ENCODE measurements at regions of chr17 and their contacts with region 1.

Region 1: DNA sequence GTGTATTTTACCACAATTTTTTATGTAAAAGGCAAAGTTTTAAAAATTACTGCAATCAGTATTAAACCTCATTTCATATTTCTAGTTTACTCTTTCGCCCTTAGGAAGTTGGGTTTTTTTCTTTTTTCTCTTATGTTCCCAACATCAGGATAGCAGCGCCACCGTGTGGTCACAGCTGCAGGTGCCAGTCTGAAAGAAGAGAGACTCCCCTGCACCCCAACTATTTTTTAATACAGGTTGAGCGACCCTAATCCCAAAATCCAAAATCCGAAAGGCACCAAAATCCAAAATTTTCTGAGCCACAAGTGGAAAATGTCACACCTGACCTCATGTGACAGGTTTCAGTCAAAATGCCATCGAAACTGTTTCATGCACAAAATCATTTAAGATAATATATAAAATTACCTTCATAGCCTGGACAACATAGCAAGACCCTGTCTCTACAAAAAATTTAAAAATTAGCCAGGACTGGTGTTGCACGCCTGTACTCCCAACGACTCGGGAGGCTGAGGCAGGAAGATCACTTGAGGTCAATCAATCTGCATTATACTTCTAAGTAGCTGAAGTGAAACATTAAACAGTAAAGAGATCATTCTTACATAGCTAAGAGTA is 21.8 kb upstream of the ASGR2 start:
- DNase-seq: peak; percentile 80
- ATAC-seq: no peak
- H3K4me3 Mint-ChIP-seq: peak overlapping the region; percentile 50
- H3K27ac Mint-ChIP-seq: no peak overlapping the region
- H3K4me1 Mint-ChIP-seq: peaks cover 62% of the 10 kb centered on the region
- H3K27me3 Mint-ChIP-seq: peaks cover 48% of the 10 kb centered on the region
- CTCF ChIP-seq: peak; percentile 83

Region 2: GRCh38 chr17:7021993-7022778 is 114.2 kb before region 1 on chr17:
- CTCF ChIA-PET with region 1: interaction called, 10 read pairs
- POLR2A ChIA-PET with region 1: no interaction called
- DNase-seq: peak; percentile 90
- ATAC-seq: peak; percentile 63
- H3K4me3 Mint-ChIP-seq: peak overlapping the region; percentile 91
- H3K27ac Mint-ChIP-seq: peak overlapping the region; percentile 93
- H3K4me1 Mint-ChIP-seq: peaks cover 51% of the 10 kb centered on the region
- H3K27me3 Mint-ChIP-seq: peaks cover 44% of the 10 kb centered on the region
- CTCF ChIP-seq: peak; percentile 88

Region 3: GRCh38 chr17:7060165-7060891 is 76.0 kb before region 1 on chr17:
- CTCF ChIA-PET with region 1: interaction called, 105 read pairs
- POLR2A ChIA-PET with region 1: no interaction called
- DNase-seq: no peak
- ATAC-seq: no peak
- H3K4me3 Mint-ChIP-seq: no peak overlapping the region
- H3K27ac Mint-ChIP-seq: no peak overlapping the region
- H3K4me1 Mint-ChIP-seq: no peaks in the 10 kb centered on the region; the same call in 1 of the 2 replicates
- H3K27me3 Mint-ChIP-seq: peaks cover 30% of the 10 kb centered on the region
- CTCF ChIP-seq: no peak

Region 4: GRCh38 chr17:7114875-7115614 is 21.3 kb before region 1 on chr17:
- CTCF ChIA-PET with region 1: interaction called, 19 read pairs
- POLR2A ChIA-PET with region 1: no interaction called
- DNase-seq: no peak
- ATAC-seq: no peak; the same call in 1 of the 2 replicates
- H3K4me3 Mint-ChIP-seq: no peak overlapping the region
- H3K27ac Mint-ChIP-seq: 0 out of 2 replicates have a peak overlapping the region, but pooled peaks have one; percentile 30
- H3K4me1 Mint-ChIP-seq: peaks cover 25% of the 10 kb centered on the region
- H3K27me3 Mint-ChIP-seq: peaks cover 7% of the 10 kb centered on the region
- CTCF ChIP-seq: no peak

Region 5: GRCh38 chr17:7147772-7148171 is 11.4 kb after region 1 on chr17:
- CTCF ChIA-PET with region 1: interaction called, 30 read pairs
- POLR2A ChIA-PET with region 1: no interaction called
- DNase-seq: no peak
- ATAC-seq: no peak
- H3K4me3 Mint-ChIP-seq: no peak overlapping the region
- H3K27ac Mint-ChIP-seq: no peak overlapping the region
- H3K4me1 Mint-ChIP-seq: peaks cover 17% of the 10 kb centered on the region
- H3K27me3 Mint-ChIP-seq: peaks cover 4% of the 10 kb centered on the region
- CTCF ChIP-seq: no peak

Region 6: DNA sequence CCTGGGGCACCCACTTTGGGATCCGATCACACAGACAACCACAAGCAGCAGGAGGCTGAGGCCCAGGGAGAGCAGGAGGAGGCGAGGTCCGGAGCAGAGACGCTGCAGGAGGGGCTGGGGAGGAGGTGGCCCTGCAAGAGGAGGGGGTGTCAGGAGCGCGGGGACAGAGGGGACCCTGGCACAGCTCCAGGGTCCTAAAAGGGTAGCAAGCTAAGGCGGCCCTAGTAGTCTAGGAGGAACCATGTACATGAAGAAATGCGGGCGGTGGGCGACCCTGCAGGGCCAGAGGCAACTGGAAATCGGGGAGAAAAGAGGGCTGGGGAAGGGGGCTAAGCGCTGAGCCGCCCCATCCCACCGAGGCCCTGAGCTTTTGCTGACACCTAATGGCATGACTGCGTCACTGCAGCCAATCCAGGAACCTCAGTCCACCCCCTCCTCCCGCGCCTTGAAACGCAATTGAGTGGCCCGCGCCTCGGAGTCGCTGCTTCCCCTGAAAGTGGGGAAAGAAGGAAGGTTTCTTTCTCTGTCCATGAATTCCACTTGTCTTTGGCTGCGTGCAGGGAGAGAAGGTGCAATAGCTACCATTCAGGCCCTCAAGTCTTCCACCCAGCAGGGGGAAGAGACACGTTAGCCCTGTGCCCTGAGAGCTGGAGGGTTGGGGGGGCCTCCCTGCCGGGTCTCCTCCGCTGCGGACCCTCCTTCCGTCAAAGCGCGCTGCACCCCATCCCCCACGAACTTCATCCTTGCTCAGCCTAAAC is 41.0 kb after region 1 on chr17:
- CTCF ChIA-PET with region 1: interaction called, 40 read pairs
- POLR2A ChIA-PET with region 1: no interaction called
- DNase-seq: peak; percentile 85
- ATAC-seq: peak; percentile 68
- H3K4me3 Mint-ChIP-seq: no peak overlapping the region
- H3K27ac Mint-ChIP-seq: peak overlapping the region; percentile 80; the same call in 1 of the 2 replicates
- H3K4me1 Mint-ChIP-seq: peaks cover 12% of the 10 kb centered on the region
- H3K27me3 Mint-ChIP-seq: peaks cover 10% of the 10 kb centered on the region
- CTCF ChIP-seq: peak; percentile 77

Region 7: GRCh38 chr17:7237266-7237760 is 100.9 kb after region 1 on chr17:
- CTCF ChIA-PET with region 1: no interaction called
- POLR2A ChIA-PET with region 1: no interaction called
- DNase-seq: no peak
- ATAC-seq: no peak
- H3K4me3 Mint-ChIP-seq: peak overlapping the region; percentile 95
- H3K27ac Mint-ChIP-seq: peak overlapping the region; percentile 15
- H3K4me1 Mint-ChIP-seq: peaks cover 44% of the 10 kb centered on the region
- H3K27me3 Mint-ChIP-seq: no peaks in the 10 kb centered on the region
- CTCF ChIP-seq: no peak

Measured in WTC11 (cell line).